ENCODE measurements at regions of chr10 and their contacts with region 1.

Region 1: DNA sequence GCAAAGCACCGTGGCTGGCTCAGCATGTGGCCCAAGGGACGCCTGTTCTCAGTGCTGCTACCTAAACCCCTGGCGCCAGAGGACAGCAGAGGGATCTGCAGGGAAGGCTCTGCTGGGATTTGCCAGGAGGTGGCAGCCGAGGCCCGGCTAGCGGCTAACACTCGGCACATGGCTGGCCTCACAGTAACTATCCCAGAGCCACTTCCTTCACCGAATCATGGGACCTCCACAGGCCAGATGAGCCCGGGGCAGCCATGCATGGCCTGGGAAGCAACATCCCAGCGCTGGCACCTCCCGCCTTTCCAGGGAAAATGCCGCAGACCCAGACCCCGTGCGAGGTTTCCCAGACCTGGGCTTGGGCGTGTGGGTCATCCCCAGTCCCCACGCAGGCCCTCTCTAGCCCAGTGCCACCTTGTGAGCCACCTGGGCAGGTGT is 36.4 kb downstream of the DPYSL4 start:
- DNase-seq: peak; percentile 50
- H3K4me3 ChIP-seq: no peak overlapping the region
- H3K27ac ChIP-seq: no peak overlapping the region
- H3K27me3 ChIP-seq: no peaks in the 10 kb centered on the region
- CTCF ChIP-seq: peak; percentile 99

Region 2: DNA sequence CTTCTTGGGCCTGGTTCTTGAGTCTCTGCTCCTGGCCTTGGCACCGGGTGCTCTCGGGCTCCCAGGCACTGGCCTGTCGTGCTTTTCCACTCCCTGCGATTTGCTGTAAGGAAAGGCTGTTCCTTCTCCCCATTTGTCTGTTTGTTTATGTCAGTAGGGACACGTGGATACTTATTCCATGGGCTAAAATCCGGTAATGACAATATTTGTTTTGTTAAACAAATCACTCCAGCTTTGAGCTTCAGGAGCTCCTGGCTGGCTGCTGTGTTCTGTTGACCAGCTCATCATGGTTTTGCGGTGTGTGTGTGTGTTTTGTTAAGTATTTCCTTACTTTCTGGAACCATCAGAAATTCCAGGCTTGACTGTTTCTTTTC is 174.9 kb before region 1 on chr10:
- CTCF ChIA-PET with region 1: no interaction called
- POLR2A ChIA-PET with region 1: no interaction called
- DNase-seq: no peak
- H3K4me3 ChIP-seq: no peak overlapping the region
- H3K27ac ChIP-seq: no peak overlapping the region
- H3K27me3 ChIP-seq: peaks cover 16% of the 10 kb centered on the region
- CTCF ChIP-seq: no peak

Region 3: DNA sequence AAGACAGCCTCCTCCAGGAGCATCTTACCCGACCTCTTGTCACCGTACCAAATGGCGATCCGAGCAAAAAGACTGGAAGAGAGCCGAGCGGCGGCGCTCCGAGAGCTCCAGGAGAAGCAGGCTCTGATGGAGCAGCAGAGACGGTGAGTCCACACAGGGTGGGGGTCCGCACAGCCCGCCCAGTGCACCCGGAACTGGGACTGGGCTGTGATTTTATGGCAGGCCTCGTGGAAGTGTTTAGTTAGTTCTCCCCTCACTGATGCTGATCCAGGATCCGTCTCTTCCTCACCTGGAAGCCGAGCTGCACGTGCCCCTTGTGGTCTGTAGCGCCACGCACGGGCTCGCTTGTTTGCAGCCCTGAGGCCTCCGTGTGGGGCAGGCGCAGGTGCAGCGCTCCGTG is 128.4 kb after region 1 on chr10:
- CTCF ChIA-PET with region 1: interaction called, 31 read pairs
- POLR2A ChIA-PET with region 1: no interaction called
- DNase-seq: no peak
- H3K4me3 ChIP-seq: no peak overlapping the region
- H3K27ac ChIP-seq: no peak overlapping the region
- H3K27me3 ChIP-seq: no peaks in the 10 kb centered on the region
- CTCF ChIP-seq: no peak

Region 4: DNA sequence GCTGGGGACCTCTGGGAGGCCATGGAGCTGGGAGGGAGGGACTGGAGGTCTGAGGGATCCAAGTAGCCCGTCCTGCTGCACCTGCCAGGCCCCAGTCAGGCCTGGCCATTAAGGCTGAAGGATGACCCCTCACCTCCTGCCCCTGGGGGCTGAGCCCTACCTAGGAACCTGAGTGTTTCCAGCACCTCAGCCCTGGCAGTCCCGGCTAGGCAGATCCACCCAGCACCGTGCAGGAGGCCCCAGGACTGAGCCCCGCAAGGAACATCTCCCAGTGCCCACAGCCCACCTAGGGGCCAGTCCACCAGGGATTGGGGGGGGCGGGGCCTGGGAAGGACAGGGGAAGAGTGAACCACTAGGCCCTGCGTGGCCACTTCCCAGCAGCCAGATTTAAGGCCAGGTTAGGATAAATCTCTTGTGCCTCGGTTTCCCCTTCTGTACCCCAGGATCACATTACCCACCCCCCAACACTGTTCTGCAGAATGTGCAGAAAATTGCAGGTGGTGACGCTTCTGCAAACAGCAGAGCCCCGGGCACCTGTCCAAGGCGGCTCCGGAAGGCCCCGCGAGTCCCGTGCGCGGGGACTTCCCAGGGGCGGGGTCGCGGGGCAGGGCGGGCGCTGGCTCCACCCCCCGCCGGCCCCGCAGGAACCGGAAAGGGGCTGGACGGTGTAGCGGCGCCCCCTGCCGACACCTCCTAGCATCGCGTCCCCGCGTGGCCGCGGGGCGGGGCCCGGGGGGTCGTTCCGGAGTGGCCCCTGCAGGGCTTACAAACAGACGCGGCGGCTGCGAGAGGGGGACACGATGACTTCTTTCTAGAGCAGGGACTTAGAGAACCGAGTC is 229.7 kb after region 1 on chr10:
- CTCF ChIA-PET with region 1: interaction called, 15 read pairs
- POLR2A ChIA-PET with region 1: no interaction called
- DNase-seq: peak; percentile 18
- H3K4me3 ChIP-seq: peak overlapping the region; percentile 35
- H3K27ac ChIP-seq: no peak overlapping the region
- H3K27me3 ChIP-seq: peaks cover 14% of the 10 kb centered on the region
- CTCF ChIP-seq: peak; percentile 79

Measured in AG04450 (cell line).